ENCODE measurements at regions of chr2 and their contacts with region 1.

Region 1: DNA sequence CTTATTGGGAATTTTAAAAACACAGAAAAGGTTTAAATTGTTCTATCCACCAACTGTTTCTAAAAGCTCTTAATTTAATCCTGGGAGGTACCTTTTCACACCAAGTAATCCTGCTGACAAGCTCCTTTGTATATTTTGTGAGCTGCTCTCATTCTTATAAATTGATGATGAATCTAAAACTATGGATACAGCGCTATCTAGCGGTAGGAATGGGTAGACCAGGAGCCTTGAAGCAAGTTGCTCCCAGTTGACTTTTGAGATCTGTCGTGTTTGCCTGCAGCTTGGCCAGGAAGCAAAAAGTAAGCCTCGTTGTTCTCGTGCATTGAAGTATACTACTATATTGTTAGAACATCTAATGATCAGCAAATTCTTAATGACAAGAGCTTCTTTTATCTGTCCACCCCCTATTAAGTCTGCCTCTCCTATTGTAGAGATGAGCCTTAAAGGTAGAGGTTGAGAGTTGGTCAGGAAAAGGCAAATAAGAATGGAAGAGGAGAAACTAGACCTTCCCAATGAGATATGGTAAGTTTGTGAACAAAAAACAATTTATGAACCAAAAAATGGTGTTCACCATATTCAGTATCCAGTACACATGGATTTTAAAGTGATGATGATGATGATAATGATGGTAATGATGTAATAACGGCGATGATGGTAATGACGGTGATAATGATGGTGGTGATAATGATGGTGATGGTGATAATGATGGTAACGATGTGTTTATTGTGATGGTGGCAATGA is 212.0 kb upstream of the NCKAP5 start:
- DNase-seq: no peak
- ATAC-seq: no peak
- H3K4me3 ChIP-seq: no peak overlapping the region
- H3K27ac ChIP-seq: no peak overlapping the region
- H3K4me1 ChIP-seq: no peaks in the 10 kb centered on the region
- H3K27me3 ChIP-seq: no peaks in the 10 kb centered on the region
- CTCF ChIP-seq: peak in 4 of 5 experiments; percentile 6 to 57 (median 48)
- POLR2A ChIP-seq: no peak

Region 2: GRCh38 chr2:132547074-132547687 is 1233.1 kb before region 1 on chr2:
- in situ Hi-C with region 1: loop called in 1 of 4 experiments (anchors 10 kb)
- intact Hi-C with region 1: no loop called
- DNase-seq: peak in 1 of 2 donors; percentile 21
- ATAC-seq: no peak
- H3K4me3 ChIP-seq: no peak overlapping the region
- H3K27ac ChIP-seq: no peak overlapping the region
- H3K4me1 ChIP-seq: no peaks in the 10 kb centered on the region
- H3K27me3 ChIP-seq: no peaks in the 10 kb centered on the region
- CTCF ChIP-seq: peak in 3 of 5 experiments; percentile 25 to 45 (median 33)
- POLR2A ChIP-seq: no peak

Region 3: DNA sequence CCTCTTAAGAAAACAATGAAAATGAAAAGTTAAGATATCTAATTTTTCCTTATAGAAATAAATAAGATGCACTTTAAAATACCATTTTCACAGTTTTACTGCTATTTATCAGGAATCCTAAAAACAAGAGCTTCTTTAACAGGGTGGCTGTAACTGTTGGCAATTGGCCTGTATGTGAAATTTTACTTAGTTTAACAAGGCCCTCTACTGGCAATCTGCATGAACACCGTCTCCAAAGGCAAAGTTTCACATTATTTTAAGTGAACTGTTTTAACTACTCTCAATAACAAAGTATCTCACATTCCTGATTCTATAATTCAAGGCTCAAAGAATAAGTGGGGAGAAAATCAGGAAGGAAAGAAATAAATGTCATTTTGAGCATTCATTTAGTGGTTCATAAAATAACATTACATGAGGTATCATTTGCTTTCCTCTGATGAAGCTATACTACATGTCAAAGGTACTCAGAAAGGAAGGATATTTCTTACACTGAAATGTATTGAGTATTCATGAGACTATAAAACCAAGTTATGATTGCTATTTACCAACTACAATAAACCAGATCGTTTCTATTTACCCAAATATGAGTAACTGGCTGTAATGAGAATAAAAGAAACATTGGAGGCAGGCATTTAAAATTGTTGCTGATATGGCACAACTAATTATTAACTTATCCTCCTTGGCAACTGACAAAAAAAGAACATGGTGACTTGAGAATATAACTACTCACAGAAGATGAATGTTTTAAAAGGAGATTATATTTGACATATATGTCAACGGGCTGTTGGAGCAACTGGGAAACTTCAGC is 219.0 kb before region 1 on chr2:
- in situ Hi-C with region 1: no loop called
- intact Hi-C with region 1: loop called (anchors 10 kb)
- DNase-seq: no peak
- ATAC-seq: no peak
- H3K4me3 ChIP-seq: no peak overlapping the region
- H3K27ac ChIP-seq: no peak overlapping the region
- H3K4me1 ChIP-seq: no peaks in the 10 kb centered on the region
- H3K27me3 ChIP-seq: no peaks in the 10 kb centered on the region
- CTCF ChIP-seq: peak in 4 of 5 experiments; percentile 17 to 35 (median 32)
- POLR2A ChIP-seq: no peak

Region 4: DNA sequence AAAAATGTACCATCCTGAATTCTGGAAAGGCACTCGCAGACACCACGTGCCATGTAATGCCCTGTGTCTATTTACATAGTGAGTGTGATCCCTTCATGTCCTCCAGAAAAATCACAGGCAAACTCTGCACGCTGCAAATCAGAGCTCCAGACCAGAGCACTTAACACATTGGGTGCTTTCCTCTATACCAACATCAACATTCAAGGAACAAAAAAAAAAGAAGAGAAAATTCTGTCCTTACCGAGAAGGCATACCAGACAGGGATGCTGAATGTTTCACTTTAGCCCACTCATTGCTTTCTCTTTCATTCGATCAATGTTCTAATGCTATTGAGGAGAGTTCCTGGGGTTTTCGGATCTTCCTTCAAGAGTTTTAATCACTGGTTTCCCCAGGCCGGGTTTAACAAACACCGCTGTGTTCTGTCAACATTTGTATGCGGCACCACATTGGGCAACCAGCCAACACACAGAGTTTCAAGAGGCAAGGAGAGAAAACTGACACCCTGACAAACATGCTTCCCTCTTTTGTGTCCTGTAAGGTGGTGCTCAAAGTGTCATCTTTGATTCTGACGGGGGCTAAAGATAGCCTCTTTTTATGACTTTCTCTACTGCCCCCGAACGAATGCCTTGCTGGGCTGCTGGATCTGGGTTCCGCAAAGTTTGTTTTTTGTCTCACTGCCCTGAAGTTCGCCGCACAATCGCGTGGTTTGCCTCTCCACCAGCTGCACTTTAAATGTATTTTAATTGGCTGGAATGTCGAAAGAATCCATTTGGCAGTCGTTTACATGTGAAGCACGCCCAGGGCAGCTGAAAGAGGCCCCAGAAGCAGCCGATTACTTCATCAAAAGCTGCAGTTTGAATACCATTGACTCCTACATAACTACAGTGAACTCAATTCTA is 105.6 kb before region 1 on chr2:
- in situ Hi-C with region 1: no loop called
- intact Hi-C with region 1: loop called (anchors 10 kb)
- DNase-seq: peak in 1 of 2 donors; percentile 12
- ATAC-seq: peak in 1 of 2 donors; percentile 51
- H3K4me3 ChIP-seq: peak overlapping the region; percentile 13 to 29 (median 22)
- H3K27ac ChIP-seq: peak overlapping the region in 1 of 4 donors; percentile 34
- H3K4me1 ChIP-seq: peaks cover 4 to 24% of the 10 kb centered on the region in 2 donors
- H3K27me3 ChIP-seq: no peaks in the 10 kb centered on the region
- CTCF ChIP-seq: no peak
- POLR2A ChIP-seq: no peak

Region 5: GRCh38 chr2:133755480-133756300 is 24.6 kb before region 1 on chr2:
- in situ Hi-C with region 1: no loop called
- intact Hi-C with region 1: no loop called
- DNase-seq: no peak
- ATAC-seq: no peak
- H3K4me3 ChIP-seq: no peak overlapping the region
- H3K27ac ChIP-seq: no peak overlapping the region
- H3K4me1 ChIP-seq: peaks cover 3 to 6% of the 10 kb centered on the region in 2 donors
- H3K27me3 ChIP-seq: no peaks in the 10 kb centered on the region
- CTCF ChIP-seq: no peak
- POLR2A ChIP-seq: no peak

Measured in gastrocnemius medialis (tissue), 4 donors.